Mammary epithelial cell (primary cell): ENCODE measurements at regions of chr15 and their contacts with region 1.

Region 1: GRCh38 chr15:88225461-88225860 is 31.1 kb downstream of the NTRK3 start:
- DNase-seq: no peak
- H3K4me3 ChIP-seq: no peak overlapping the region
- H3K27ac ChIP-seq: no peak overlapping the region
- H3K4me1 ChIP-seq: no peaks in the 10 kb centered on the region
- H3K27me3 ChIP-seq: peaks cover 2% of the 10 kb centered on the region
- CTCF ChIP-seq: no peak

Region 2: GRCh38 chr15:87907676-87908446 is 317.6 kb before region 1 on chr15:
- CTCF ChIA-PET with region 1: no interaction called
- dilution Hi-C with region 1: no loop called
- in situ Hi-C with region 1: no loop called
- intact Hi-C with region 1: no loop called
- DNase-seq: no peak
- H3K4me3 ChIP-seq: no peak overlapping the region
- H3K27ac ChIP-seq: no peak overlapping the region
- H3K4me1 ChIP-seq: no peaks in the 10 kb centered on the region
- H3K27me3 ChIP-seq: peaks cover 1% of the 10 kb centered on the region
- CTCF ChIP-seq: no peak

Region 3: GRCh38 chr15:88139936-88140335 is 85.5 kb before region 1 on chr15:
- CTCF ChIA-PET with region 1: no interaction called
- dilution Hi-C with region 1: loop called (anchors 5 kb)
- in situ Hi-C with region 1: no loop called
- intact Hi-C with region 1: no loop called
- DNase-seq: no peak
- H3K4me3 ChIP-seq: no peak overlapping the region
- H3K27ac ChIP-seq: no peak overlapping the region
- H3K4me1 ChIP-seq: no peaks in the 10 kb centered on the region
- H3K27me3 ChIP-seq: no peaks in the 10 kb centered on the region
- CTCF ChIP-seq: no peak

Region 4: GRCh38 chr15:88288664-88289063 is 63.2 kb after region 1 on chr15:
- CTCF ChIA-PET with region 1: no interaction called
- dilution Hi-C with region 1: no loop called
- in situ Hi-C with region 1: no loop called
- intact Hi-C with region 1: no loop called
- DNase-seq: no peak
- H3K4me3 ChIP-seq: no peak overlapping the region
- H3K27ac ChIP-seq: no peak overlapping the region
- H3K4me1 ChIP-seq: no peaks in the 10 kb centered on the region
- H3K27me3 ChIP-seq: no peaks in the 10 kb centered on the region
- CTCF ChIP-seq: no peak